MCF 10A (cell line): ENCODE measurements at regions of chr3 and their contacts with region 1.

Region 1: DNA sequence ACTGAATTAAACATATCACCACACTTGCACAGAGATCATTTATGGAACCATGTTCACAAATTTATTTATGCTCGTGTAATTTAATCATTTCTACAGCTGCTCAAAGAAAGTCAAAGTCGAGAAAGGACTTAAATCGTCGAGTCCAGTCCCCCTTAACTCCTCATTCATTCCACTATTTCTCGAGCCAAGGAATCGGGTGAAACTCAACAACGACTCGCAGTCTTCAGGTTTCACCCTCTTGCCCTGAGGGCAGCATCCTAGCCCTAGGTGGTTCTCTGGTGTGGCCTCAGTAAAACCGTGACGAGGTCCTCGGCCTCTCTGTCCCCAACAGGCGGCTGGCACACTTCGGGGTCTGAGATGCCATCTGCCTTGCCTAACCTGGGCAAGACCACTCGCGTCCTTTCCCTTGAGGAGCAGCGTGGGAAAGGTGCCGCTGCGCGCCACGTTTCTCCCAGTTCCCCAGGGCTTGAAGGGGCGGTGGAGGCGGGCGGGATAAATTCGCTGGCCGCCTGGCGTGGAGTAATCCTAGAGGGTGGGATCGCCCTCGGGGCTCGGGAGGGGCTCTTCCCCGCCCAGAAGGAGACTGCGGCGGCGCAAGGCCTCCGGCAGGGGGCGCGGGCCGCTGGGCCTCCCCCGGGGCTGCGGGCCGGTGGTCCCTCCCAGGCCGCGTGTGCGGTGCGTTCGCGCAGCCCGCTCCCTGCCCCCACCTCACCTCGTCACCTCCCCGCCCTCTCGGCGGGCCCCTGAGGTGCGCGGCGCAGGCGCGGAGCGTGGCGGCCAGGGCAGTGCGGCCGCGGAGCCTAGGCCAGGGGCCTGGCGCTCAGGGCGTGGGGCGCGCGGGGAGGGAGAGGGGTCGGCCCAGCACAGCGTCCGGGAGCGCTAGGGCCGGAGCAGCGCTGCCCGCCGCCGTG is at the start of gene ZNF639:
- DNase-seq: peak; percentile 72
- H3K4me3 Mint-ChIP-seq: peak within 1 kb of the TSS; percentile 81
- H3K27ac Mint-ChIP-seq: peak within 1 kb of the TSS; percentile 90
- H3K4me1 Mint-ChIP-seq: peaks cover 20% of the 10 kb centered on the region
- H3K27me3 Mint-ChIP-seq: no peaks in the 10 kb centered on the region
- CTCF ChIP-seq: peak; percentile 68
- total RNA-seq, gene ZNF639: 35.5 and 52.8 TPM in 2 replicates

Region 2: GRCh38 chr3:179027326-179027900 is 295.1 kb before region 1 on chr3:
- CTCF ChIA-PET with region 1: interaction called, 11 read pairs
- POLR2A ChIA-PET with region 1: no interaction called
- intact Hi-C with region 1: no loop called
- DNase-seq: peak; percentile 71
- H3K4me3 Mint-ChIP-seq: peak overlapping the region; percentile 48
- H3K27ac Mint-ChIP-seq: peak overlapping the region; percentile 89
- H3K4me1 Mint-ChIP-seq: peaks cover 16% of the 10 kb centered on the region
- H3K27me3 Mint-ChIP-seq: no peaks in the 10 kb centered on the region
- CTCF ChIP-seq: no peak

Region 3: GRCh38 chr3:179108086-179108485 is 214.5 kb before region 1 on chr3:
- CTCF ChIA-PET with region 1: interaction called, 99 read pairs
- POLR2A ChIA-PET with region 1: interaction called, 4 read pairs
- intact Hi-C with region 1: no loop called
- DNase-seq: no peak
- H3K4me3 Mint-ChIP-seq: no peak overlapping the region
- H3K27ac Mint-ChIP-seq: no peak overlapping the region
- H3K4me1 Mint-ChIP-seq: no peaks in the 10 kb centered on the region
- H3K27me3 Mint-ChIP-seq: no peaks in the 10 kb centered on the region
- CTCF ChIP-seq: no peak

Region 4: GRCh38 chr3:179347345-179348194 is 25.0 kb after region 1 on chr3 and contains the start of gene MFN1:
- CTCF ChIA-PET with region 1: interaction called, 6 read pairs
- POLR2A ChIA-PET with region 1: interaction called, 30 read pairs
- intact Hi-C with region 1: no loop called
- DNase-seq: peak; percentile 96
- H3K4me3 Mint-ChIP-seq: peak within 1 kb of the TSS; percentile 99
- H3K27ac Mint-ChIP-seq: peak within 1 kb of the TSS; percentile 96
- H3K4me1 Mint-ChIP-seq: no peaks in the 10 kb centered on the region
- H3K27me3 Mint-ChIP-seq: no peaks in the 10 kb centered on the region
- CTCF ChIP-seq: no peak
- total RNA-seq, gene MFN1: 50.1 and 63.7 TPM in 2 replicates